ENCODE measurements at regions of chr17 and their contacts with region 1.

Region 1: GRCh38 chr17:47941236-47941994 is at the start of gene PNPO:
- DNase-seq: peak; percentile 100
- ATAC-seq: peak; percentile 96
- H3K4me3 ChIP-seq: peak within 1 kb of the TSS; percentile 75 to 87 (median 76)
- H3K27ac ChIP-seq: peak within 1 kb of the TSS; percentile 95
- H3K4me1 ChIP-seq: peaks cover 75% of the 10 kb centered on the region
- H3K27me3 ChIP-seq: no peaks in the 10 kb centered on the region
- CTCF ChIP-seq: peak; percentile 35; the same call in 1 of the 2 replicates
- EP300 ChIP-seq: no peak; a peak in 1 of 4 replicates
- POLR2A ChIP-seq: peak; percentile 73 to 81; a peak in 3 of 4 replicates
- RAD21 ChIP-seq: peak; percentile 69
- total RNA-seq, gene PNPO: 63.3 and 110 TPM in 2 replicates

Region 2: GRCh38 chr17:47831003-47831933 is 110.1 kb before region 1 on chr17 and contains the starts of genes LRRC46 and MRPL10:
- CTCF ChIA-PET with region 1: no interaction called
- POLR2A ChIA-PET with region 1: interaction called, 16 read pairs
- in situ Hi-C with region 1: no loop called
- intact Hi-C with region 1: no loop called
- DNase-seq: peak; percentile 91
- ATAC-seq: peak; percentile 95
- H3K4me3 ChIP-seq: peak within 1 kb of the TSS; percentile 81 to 97 (median 82)
- H3K27ac ChIP-seq: peak within 1 kb of the TSS; percentile 69
- H3K4me1 ChIP-seq: peaks cover 23% of the 10 kb centered on the region
- H3K27me3 ChIP-seq: peaks cover 0 to 5% of the 10 kb centered on the region in 2 experiments; a peak in 1 of 5 replicates
- CTCF ChIP-seq: peak; percentile 59
- EP300 ChIP-seq: peak in 1 of 2 experiments; percentile 24; a peak in 1 of 4 replicates
- POLR2A ChIP-seq: peak; percentile 96 to 98
- RAD21 ChIP-seq: peak; percentile 25; the same call in 1 of the 2 replicates
- total RNA-seq, gene LRRC46: 0.09 and 0.13 TPM in 2 replicates
- total RNA-seq, gene MRPL10: 56.7 and 59.7 TPM in 2 replicates

Region 3: DNA sequence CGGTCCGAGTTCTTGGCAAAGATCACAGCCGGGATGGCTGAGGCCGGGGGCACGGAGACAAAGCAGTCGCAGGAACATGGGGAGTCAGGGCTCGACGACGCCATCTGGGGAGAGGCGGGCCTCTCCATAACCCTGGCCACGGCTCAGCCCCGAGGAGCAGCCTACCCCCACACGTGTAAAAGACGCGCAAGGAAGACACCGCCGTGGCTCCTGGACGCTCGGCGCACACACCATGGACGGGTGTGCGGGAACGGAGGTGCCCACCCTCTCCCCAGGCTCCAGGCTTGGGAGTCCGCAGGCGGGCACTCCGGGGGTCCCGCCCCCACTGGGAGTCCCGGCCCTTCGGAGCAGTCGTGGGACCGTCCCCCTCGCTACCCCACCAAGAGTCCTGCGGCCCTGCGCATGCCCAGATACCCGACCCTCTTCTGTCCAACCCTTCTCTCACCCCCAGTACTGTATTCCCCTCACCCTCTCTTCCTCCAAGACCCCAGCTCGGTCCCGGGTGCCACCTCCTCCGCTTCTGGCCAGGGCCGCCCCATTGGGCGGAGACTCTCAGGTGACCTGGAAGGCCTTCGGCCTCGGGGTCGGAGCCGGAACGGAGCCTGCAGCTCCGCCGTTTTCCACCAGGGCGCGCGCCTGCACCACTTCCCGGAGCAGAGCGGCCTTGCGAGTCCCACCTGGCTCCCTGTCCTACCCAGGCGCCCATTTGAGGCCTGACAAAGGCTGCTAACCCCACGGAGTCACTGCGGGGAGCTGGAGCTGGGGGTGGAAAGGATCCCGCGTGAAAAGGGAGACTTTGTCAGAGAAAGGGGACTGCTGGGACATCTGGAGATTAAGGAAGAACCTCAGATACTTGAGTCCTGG is 100.4 kb before region 1 on chr17 and contains the start of gene SCRN2:
- CTCF ChIA-PET with region 1: no interaction called
- POLR2A ChIA-PET with region 1: interaction called, 12 read pairs
- in situ Hi-C with region 1: no loop called
- intact Hi-C with region 1: no loop called
- DNase-seq: peak; percentile 87
- ATAC-seq: peak; percentile 86
- H3K4me3 ChIP-seq: peak within 1 kb of the TSS; percentile 80 to 95 (median 84)
- H3K27ac ChIP-seq: peak within 1 kb of the TSS; percentile 66
- H3K4me1 ChIP-seq: peaks cover 72% of the 10 kb centered on the region
- H3K27me3 ChIP-seq: no peaks in the 10 kb centered on the region; a peak in 1 of 5 replicates
- CTCF ChIP-seq: peak; percentile 99
- EP300 ChIP-seq: 0 out of 4 replicates have a peak, but pooled peaks of 1 of the 2 experiments have one; percentile 15
- POLR2A ChIP-seq: peak; percentile 40 to 78; a peak in 3 of 4 replicates
- RAD21 ChIP-seq: peak; percentile 99
- total RNA-seq, gene SCRN2: 15.0 and 29.5 TPM in 2 replicates

Region 4: DNA sequence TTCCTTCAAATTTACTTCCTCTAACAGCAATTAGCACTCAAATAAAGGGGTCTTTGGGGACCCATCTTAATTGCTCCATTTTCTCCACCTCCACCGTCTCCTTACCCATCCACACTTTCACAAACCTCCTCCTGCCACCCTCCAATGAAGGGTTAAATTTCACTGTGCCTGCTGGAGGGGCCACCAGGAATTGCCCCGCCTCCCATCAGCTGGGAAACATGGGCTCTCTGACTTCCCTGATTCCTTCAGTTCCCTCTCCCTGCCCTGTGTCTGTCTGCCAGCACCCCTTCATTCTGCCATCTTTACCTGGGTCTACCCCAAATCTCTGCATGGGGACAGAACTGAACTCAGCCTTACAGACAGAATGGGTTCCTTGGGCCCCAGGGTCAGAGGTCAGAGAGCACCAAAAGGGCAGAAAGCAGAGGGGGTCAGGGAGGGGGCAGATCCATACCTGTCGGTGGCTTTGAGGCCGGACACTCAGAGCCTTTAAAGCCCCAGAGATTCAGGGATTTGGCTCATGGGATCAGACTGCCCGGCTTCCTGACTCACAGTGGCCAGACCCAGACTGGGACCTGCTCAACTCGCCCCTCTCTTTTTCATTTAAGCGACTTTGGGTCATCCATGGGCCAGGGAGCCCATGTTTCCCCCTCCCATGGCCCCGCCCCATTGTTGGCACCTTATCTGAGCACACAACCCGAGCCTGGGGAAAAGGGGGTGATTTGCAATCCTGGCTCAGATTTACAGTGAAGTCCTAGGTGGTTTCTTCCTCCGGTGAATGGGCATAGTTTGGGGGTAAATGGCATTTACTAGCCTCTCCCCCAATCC is 63.0 kb before region 1 on chr17:
- CTCF ChIA-PET with region 1: no interaction called
- POLR2A ChIA-PET with region 1: no interaction called
- in situ Hi-C with region 1: no loop called
- intact Hi-C with region 1: no loop called
- DNase-seq: no peak
- ATAC-seq: peak; percentile 25; the same call in 2 of the 3 replicates
- H3K4me3 ChIP-seq: no peak overlapping the region
- H3K27ac ChIP-seq: no peak overlapping the region
- H3K4me1 ChIP-seq: peaks cover 19% of the 10 kb centered on the region
- H3K27me3 ChIP-seq: peaks cover 6 to 56% of the 10 kb centered on the region in 2 experiments; a peak in 4 of 5 replicates
- CTCF ChIP-seq: no peak
- EP300 ChIP-seq: no peak
- POLR2A ChIP-seq: no peak
- RAD21 ChIP-seq: no peak

Region 5: GRCh38 chr17:47929218-47930000 is 12.0 kb before region 1 on chr17:
- CTCF ChIA-PET with region 1: no interaction called
- POLR2A ChIA-PET with region 1: interaction called, 23 read pairs
- in situ Hi-C with region 1: no loop called
- intact Hi-C with region 1: no loop called
- DNase-seq: no peak
- ATAC-seq: no peak
- H3K4me3 ChIP-seq: no peak overlapping the region
- H3K27ac ChIP-seq: no peak overlapping the region
- H3K4me1 ChIP-seq: peaks cover 36% of the 10 kb centered on the region
- H3K27me3 ChIP-seq: no peaks in the 10 kb centered on the region
- CTCF ChIP-seq: no peak
- EP300 ChIP-seq: no peak
- POLR2A ChIP-seq: no peak
- RAD21 ChIP-seq: no peak

Region 6: GRCh38 chr17:47957591-47958428 is 16.4 kb after region 1 on chr17 and contains the start of gene PRR15L:
- CTCF ChIA-PET with region 1: no interaction called
- POLR2A ChIA-PET with region 1: interaction called, 55 read pairs
- in situ Hi-C with region 1: no loop called
- intact Hi-C with region 1: no loop called
- DNase-seq: no peak
- ATAC-seq: peak; percentile 53
- H3K4me3 ChIP-seq: peak within 1 kb of the TSS; percentile 33 to 61 (median 38)
- H3K27ac ChIP-seq: no peak within 1 kb of the TSS
- H3K4me1 ChIP-seq: peaks cover 64% of the 10 kb centered on the region
- H3K27me3 ChIP-seq: peaks cover 0 to 2% of the 10 kb centered on the region in 2 experiments; a peak in 4 of 5 replicates
- CTCF ChIP-seq: no peak
- EP300 ChIP-seq: no peak
- POLR2A ChIP-seq: no peak
- RAD21 ChIP-seq: no peak
- total RNA-seq, gene PRR15L: 2.0 and 2.4 TPM in 2 replicates

Region 7: GRCh38 chr17:47970704-47971463 is 29.5 kb after region 1 on chr17 and contains the start of gene CDK5RAP3:
- CTCF ChIA-PET with region 1: interaction called, 11 read pairs
- POLR2A ChIA-PET with region 1: interaction called, 67 read pairs
- in situ Hi-C with region 1: no loop called
- intact Hi-C with region 1: no loop called
- DNase-seq: peak; percentile 99
- ATAC-seq: peak; percentile 97
- H3K4me3 ChIP-seq: peak within 1 kb of the TSS; percentile 66 to 95 (median 92)
- H3K27ac ChIP-seq: peak within 1 kb of the TSS; percentile 63
- H3K4me1 ChIP-seq: peaks cover 51% of the 10 kb centered on the region
- H3K27me3 ChIP-seq: no peaks in the 10 kb centered on the region; a peak in 1 of 5 replicates
- CTCF ChIP-seq: peak; percentile 100
- EP300 ChIP-seq: 0 out of 4 replicates have a peak, but pooled peaks of 1 of the 2 experiments have one; percentile 62
- POLR2A ChIP-seq: peak; percentile 92 to 95
- RAD21 ChIP-seq: peak; percentile 99
- total RNA-seq, gene CDK5RAP3: 86.8 and 128 TPM in 2 replicates

Region 8: GRCh38 chr17:48036693-48037035 is 95.2 kb after region 1 on chr17:
- CTCF ChIA-PET with region 1: no interaction called
- POLR2A ChIA-PET with region 1: no interaction called
- in situ Hi-C with region 1: no loop called
- intact Hi-C with region 1: no loop called
- DNase-seq: no peak
- ATAC-seq: peak; percentile 13
- H3K4me3 ChIP-seq: peak overlapping the region; percentile 74 to 86 (median 82)
- H3K27ac ChIP-seq: no peak overlapping the region
- H3K4me1 ChIP-seq: peaks cover 27% of the 10 kb centered on the region
- H3K27me3 ChIP-seq: peaks cover 1 to 60% of the 10 kb centered on the region in 2 experiments; a peak in 4 of 5 replicates
- CTCF ChIP-seq: no peak
- EP300 ChIP-seq: no peak
- POLR2A ChIP-seq: no peak
- RAD21 ChIP-seq: no peak

Measured in HepG2 (cell line).